ENCODE measurements at regions of chr2 and their contacts with region 1.

Region 1: DNA sequence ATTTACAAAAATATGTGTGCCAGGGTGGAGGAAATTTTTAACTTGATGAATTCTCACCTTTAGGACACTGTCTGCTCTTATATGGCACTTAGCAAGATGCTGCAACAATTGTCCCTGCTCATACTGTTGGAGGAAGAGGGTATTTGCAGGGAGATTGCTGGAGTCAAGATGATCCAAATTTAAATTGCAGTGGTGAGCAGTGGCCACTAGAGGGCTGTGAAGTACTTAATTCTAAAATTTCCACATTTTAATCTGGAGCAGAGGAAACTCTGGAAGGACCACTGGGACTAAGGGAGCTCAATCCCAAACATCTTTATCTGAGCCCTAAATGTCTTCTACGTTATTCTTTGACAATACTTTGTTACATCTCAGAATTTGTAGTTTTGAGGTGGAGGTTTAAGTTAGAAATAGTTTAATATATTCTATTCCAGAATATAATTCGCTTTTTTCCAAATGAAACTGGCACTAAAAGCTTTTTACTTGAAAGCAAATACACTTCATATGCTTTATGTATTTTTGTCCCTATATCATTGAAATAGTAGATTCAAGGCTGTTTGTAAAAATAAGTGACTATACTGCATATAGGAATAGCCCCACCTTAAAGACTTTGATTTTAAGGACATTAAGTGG is 33.0 kb upstream of the PTH2R start:
- DNase-seq: peak; percentile 29
- H3K4me3 ChIP-seq: no peak overlapping the region
- H3K27ac ChIP-seq: no peak overlapping the region
- H3K27me3 ChIP-seq: no peaks in the 10 kb centered on the region
- CTCF ChIP-seq: peak; percentile 86

Region 2: GRCh38 chr2:208285853-208286252 is 87.7 kb before region 1 on chr2:
- CTCF ChIA-PET with region 1: no interaction called
- POLR2A ChIA-PET with region 1: no interaction called
- DNase-seq: no peak
- H3K4me3 ChIP-seq: no peak overlapping the region
- H3K27ac ChIP-seq: no peak overlapping the region
- H3K27me3 ChIP-seq: no peaks in the 10 kb centered on the region
- CTCF ChIP-seq: no peak

Region 3: GRCh38 chr2:208386541-208386940 is 13.0 kb after region 1 on chr2:
- CTCF ChIA-PET with region 1: interaction called, 11 read pairs
- POLR2A ChIA-PET with region 1: no interaction called
- DNase-seq: no peak
- H3K4me3 ChIP-seq: no peak overlapping the region
- H3K27ac ChIP-seq: no peak overlapping the region
- H3K27me3 ChIP-seq: no peaks in the 10 kb centered on the region
- CTCF ChIP-seq: no peak